Caco-2 (cell line): ENCODE measurements at regions of chr12 and their contacts with region 1.

Region 1: DNA sequence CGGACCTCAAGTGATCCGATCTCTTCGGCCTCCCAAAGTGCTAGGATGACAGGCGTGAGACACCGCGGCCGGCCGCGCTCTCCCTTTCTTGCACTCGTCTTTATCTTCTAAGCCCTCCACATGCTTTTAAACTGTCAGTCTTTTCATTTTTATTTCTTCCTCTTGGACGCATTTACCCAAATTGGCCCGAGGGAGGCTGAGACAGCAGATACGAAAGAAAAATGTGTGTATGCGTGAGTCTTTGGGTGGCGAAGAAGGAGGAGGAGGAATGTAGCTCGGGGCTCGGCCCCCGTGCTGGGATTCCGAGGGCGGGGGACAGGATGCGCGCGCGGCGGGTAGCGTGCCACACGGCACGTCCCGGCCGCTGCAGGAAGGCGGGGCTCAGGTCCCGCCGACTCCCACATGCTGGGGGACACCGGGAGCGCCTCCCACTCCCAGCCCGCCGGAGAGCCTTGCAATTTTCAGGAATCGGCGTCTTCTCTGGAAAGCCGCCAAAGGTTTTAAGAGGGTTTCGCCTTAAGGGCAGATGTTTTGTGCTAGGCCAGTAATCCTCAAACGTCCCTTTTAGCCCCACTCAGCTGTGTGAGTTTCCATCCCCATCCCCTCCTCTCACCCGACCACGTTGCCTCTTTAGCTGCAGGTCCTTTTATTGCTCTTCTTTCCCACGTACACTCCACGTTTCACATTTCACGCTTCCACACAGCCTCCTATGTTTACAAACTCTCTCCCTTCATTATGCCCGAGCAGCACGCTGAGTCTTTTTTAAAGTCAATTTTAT is 34.7 kb upstream of the SLC2A3 start:
- DNase-seq: peak; percentile 99
- H3K4me3 ChIP-seq: peak overlapping the region; percentile 43
- H3K4me3 Mint-ChIP-seq: peak overlapping the region; percentile 75
- H3K27ac Mint-ChIP-seq: peak overlapping the region; percentile 76
- H3K4me1 ChIP-seq: peaks cover 34% of the 10 kb centered on the region
- H3K4me1 Mint-ChIP-seq: peaks cover 15% of the 10 kb centered on the region
- H3K27me3 ChIP-seq: no peaks in the 10 kb centered on the region
- H3K27me3 Mint-ChIP-seq: no peaks in the 10 kb centered on the region
- CTCF ChIP-seq: peak in 1 of 2 experiments; percentile 43

Region 2: GRCh38 chr12:7555752-7556151 is 414.9 kb before region 1 on chr12:
- CTCF ChIA-PET with region 1: no interaction called
- POLR2A ChIA-PET with region 1: no interaction called
- intact Hi-C with region 1: no loop called
- DNase-seq: no peak
- H3K4me3 ChIP-seq: no peak overlapping the region
- H3K4me3 Mint-ChIP-seq: no peak overlapping the region
- H3K27ac Mint-ChIP-seq: no peak overlapping the region
- H3K4me1 ChIP-seq: 0 out of 2 replicates have a peak, but pooled peaks cover 3% of the 10 kb centered on the region
- H3K4me1 Mint-ChIP-seq: no peaks in the 10 kb centered on the region
- H3K27me3 ChIP-seq: no peaks in the 10 kb centered on the region
- H3K27me3 Mint-ChIP-seq: peaks cover 15% of the 10 kb centered on the region
- CTCF ChIP-seq: no peak

Region 3: GRCh38 chr12:7923241-7924236 is 47.1 kb before region 1 on chr12:
- CTCF ChIA-PET with region 1: no interaction called
- POLR2A ChIA-PET with region 1: interaction called, 11 read pairs
- intact Hi-C with region 1: no loop called
- DNase-seq: peak; percentile 42 to 43
- H3K4me3 ChIP-seq: no peak overlapping the region
- H3K4me3 Mint-ChIP-seq: peak overlapping the region; percentile 65
- H3K27ac Mint-ChIP-seq: peak overlapping the region; percentile 73
- H3K4me1 ChIP-seq: peaks cover 62% of the 10 kb centered on the region
- H3K4me1 Mint-ChIP-seq: peaks cover 67% of the 10 kb centered on the region
- H3K27me3 ChIP-seq: no peaks in the 10 kb centered on the region
- H3K27me3 Mint-ChIP-seq: peaks cover 6% of the 10 kb centered on the region
- CTCF ChIP-seq: no peak

Region 4: GRCh38 chr12:7959701-7960121 is 11.0 kb before region 1 on chr12:
- CTCF ChIA-PET with region 1: interaction called, 9 read pairs
- POLR2A ChIA-PET with region 1: interaction called, 52 read pairs
- intact Hi-C with region 1: loop called (anchors 1 kb)
- DNase-seq: peak; percentile 87 to 91
- H3K4me3 ChIP-seq: peak overlapping the region; percentile 58
- H3K4me3 Mint-ChIP-seq: peak overlapping the region; percentile 73
- H3K27ac Mint-ChIP-seq: peak overlapping the region; percentile 47
- H3K4me1 ChIP-seq: peaks cover 55% of the 10 kb centered on the region
- H3K4me1 Mint-ChIP-seq: peaks cover 43% of the 10 kb centered on the region
- H3K27me3 ChIP-seq: no peaks in the 10 kb centered on the region
- H3K27me3 Mint-ChIP-seq: no peaks in the 10 kb centered on the region
- CTCF ChIP-seq: no peak

Region 5: GRCh38 chr12:7981446-7981845 is 10.8 kb after region 1 on chr12:
- CTCF ChIA-PET with region 1: interaction called, 5 read pairs
- POLR2A ChIA-PET with region 1: interaction called, 45 read pairs
- intact Hi-C with region 1: loop called (anchors 1 kb)
- DNase-seq: peak; percentile 67 to 68
- H3K4me3 ChIP-seq: no peak overlapping the region
- H3K4me3 Mint-ChIP-seq: peak overlapping the region; percentile 49
- H3K27ac Mint-ChIP-seq: peak overlapping the region; percentile 93
- H3K4me1 ChIP-seq: peaks cover 78% of the 10 kb centered on the region
- H3K4me1 Mint-ChIP-seq: peaks cover 69% of the 10 kb centered on the region
- H3K27me3 ChIP-seq: no peaks in the 10 kb centered on the region
- H3K27me3 Mint-ChIP-seq: no peaks in the 10 kb centered on the region
- CTCF ChIP-seq: no peak

Region 6: GRCh38 chr12:7989827-7990551 is 19.3 kb after region 1 on chr12:
- CTCF ChIA-PET with region 1: interaction called, 7 read pairs
- POLR2A ChIA-PET with region 1: interaction called, 7 read pairs
- intact Hi-C with region 1: loop called (anchors 1 kb)
- DNase-seq: peak; percentile 71 to 85
- H3K4me3 ChIP-seq: no peak overlapping the region
- H3K4me3 Mint-ChIP-seq: peak overlapping the region; percentile 52
- H3K27ac Mint-ChIP-seq: peak overlapping the region; percentile 82
- H3K4me1 ChIP-seq: peaks cover 94% of the 10 kb centered on the region
- H3K4me1 Mint-ChIP-seq: peaks cover 31% of the 10 kb centered on the region
- H3K27me3 ChIP-seq: no peaks in the 10 kb centered on the region
- H3K27me3 Mint-ChIP-seq: no peaks in the 10 kb centered on the region
- CTCF ChIP-seq: no peak

Region 7: GRCh38 chr12:8026291-8026900 is 55.7 kb after region 1 on chr12:
- CTCF ChIA-PET with region 1: no interaction called
- POLR2A ChIA-PET with region 1: interaction called, 3 read pairs
- intact Hi-C with region 1: loop called (anchors 1 kb)
- DNase-seq: peak; percentile 99 to 100
- H3K4me3 ChIP-seq: peak overlapping the region; percentile 92
- H3K4me3 Mint-ChIP-seq: peak overlapping the region; percentile 100
- H3K27ac Mint-ChIP-seq: peak overlapping the region; percentile 100
- H3K4me1 ChIP-seq: no peaks in the 10 kb centered on the region; the same call in 1 of the 2 replicates
- H3K4me1 Mint-ChIP-seq: peaks cover 14% of the 10 kb centered on the region
- H3K27me3 ChIP-seq: no peaks in the 10 kb centered on the region
- H3K27me3 Mint-ChIP-seq: no peaks in the 10 kb centered on the region
- CTCF ChIP-seq: no peak